Panc1 (cell line): ENCODE measurements at regions of chr7 and their contacts with region 1.

Region 1: GRCh38 chr7:145082366-145083161 is 246.7 kb upstream of the TPK1 start:
- DNase-seq: no peak
- ATAC-seq: no peak
- H3K4me3 ChIP-seq: no peak overlapping the region
- H3K27ac ChIP-seq: no peak overlapping the region
- H3K4me1 ChIP-seq: no peaks in the 10 kb centered on the region
- H3K27me3 ChIP-seq: no peaks in the 10 kb centered on the region
- CTCF ChIP-seq: no peak

Region 2: DNA sequence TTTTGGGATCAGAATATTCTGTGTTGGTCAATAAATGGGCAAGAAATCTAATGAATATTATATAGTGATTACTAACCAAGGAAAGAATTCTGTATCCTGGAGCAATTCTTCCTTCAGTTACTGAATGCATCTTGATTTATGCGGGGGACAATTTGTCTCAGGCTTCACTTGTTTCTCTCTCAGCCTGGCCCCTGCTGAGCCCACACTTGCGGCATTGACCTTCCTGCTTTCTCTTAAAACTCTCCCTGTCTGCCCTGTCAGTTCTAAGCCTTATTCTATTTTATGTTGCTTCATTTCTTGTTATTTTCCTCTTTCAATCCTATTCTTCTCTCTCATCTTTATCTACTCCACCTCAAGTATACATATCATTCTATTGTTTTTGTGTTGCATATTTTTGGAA is 124.6 kb before region 1 on chr7:
- CTCF ChIA-PET with region 1: no interaction called
- POLR2A ChIA-PET with region 1: no interaction called
- in situ Hi-C with region 1: no loop called
- intact Hi-C with region 1: no loop called
- DNase-seq: no peak
- ATAC-seq: no peak
- H3K4me3 ChIP-seq: no peak overlapping the region
- H3K27ac ChIP-seq: no peak overlapping the region
- H3K4me1 ChIP-seq: no peaks in the 10 kb centered on the region
- H3K27me3 ChIP-seq: no peaks in the 10 kb centered on the region
- CTCF ChIP-seq: no peak

Region 3: GRCh38 chr7:145134377-145134776 is 51.8 kb after region 1 on chr7:
- CTCF ChIA-PET with region 1: no interaction called
- POLR2A ChIA-PET with region 1: interaction called, 15 read pairs
- in situ Hi-C with region 1: no loop called
- intact Hi-C with region 1: no loop called
- DNase-seq: no peak
- ATAC-seq: no peak
- H3K4me3 ChIP-seq: no peak overlapping the region
- H3K27ac ChIP-seq: no peak overlapping the region
- H3K4me1 ChIP-seq: no peaks in the 10 kb centered on the region
- H3K27me3 ChIP-seq: no peaks in the 10 kb centered on the region
- CTCF ChIP-seq: no peak